ENCODE measurements at regions of chr17 and their contacts with region 1.

Region 1: DNA sequence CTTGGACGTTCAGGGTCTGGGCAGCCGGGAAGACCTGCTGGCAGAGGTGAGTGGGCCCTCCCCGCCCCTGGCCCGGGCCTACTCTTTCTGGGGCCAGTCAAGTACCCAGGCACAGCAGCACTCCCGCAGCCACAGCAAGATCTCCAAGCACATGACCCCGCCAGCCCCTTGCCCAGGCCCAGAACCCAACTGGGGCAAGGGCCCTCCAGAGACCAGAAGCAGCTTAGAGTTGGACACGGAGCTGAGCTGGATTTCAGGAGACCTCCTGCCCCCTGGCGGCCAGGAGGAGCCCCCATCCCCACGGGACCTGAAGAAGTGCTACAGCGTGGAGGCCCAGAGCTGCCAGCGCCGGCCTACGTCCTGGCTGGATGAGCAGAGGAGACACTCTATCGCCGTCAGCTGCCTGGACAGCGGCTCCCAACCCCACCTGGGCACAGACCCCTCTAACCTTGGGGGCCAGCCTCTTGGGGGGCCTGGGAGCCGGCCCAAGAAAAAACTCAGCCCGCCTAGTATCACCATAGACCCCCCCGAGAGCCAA is 8.6 kb upstream of the ABCC3 start:
- DNase-seq: peak; percentile 50 to 52
- H3K4me3 ChIP-seq: no peak overlapping the region
- H3K27ac ChIP-seq: no peak overlapping the region
- H3K4me1 ChIP-seq: peaks cover 31% of the 10 kb centered on the region
- H3K27me3 ChIP-seq: no peaks in the 10 kb centered on the region
- CTCF ChIP-seq: peak; percentile 91

Region 2: GRCh38 chr17:50289991-50290702 is 336.0 kb before region 1 on chr17:
- CTCF ChIA-PET with region 1: no interaction called
- POLR2A ChIA-PET with region 1: no interaction called
- intact Hi-C with region 1: no loop called
- DNase-seq: peak; percentile 70 to 98
- H3K4me3 ChIP-seq: peak overlapping the region; percentile 52
- H3K27ac ChIP-seq: peak overlapping the region; percentile 92
- H3K4me1 ChIP-seq: peaks cover 44% of the 10 kb centered on the region
- H3K27me3 ChIP-seq: no peaks in the 10 kb centered on the region
- CTCF ChIP-seq: 0 out of 2 replicates have a peak, but pooled peaks have one; percentile 14

Region 3: DNA sequence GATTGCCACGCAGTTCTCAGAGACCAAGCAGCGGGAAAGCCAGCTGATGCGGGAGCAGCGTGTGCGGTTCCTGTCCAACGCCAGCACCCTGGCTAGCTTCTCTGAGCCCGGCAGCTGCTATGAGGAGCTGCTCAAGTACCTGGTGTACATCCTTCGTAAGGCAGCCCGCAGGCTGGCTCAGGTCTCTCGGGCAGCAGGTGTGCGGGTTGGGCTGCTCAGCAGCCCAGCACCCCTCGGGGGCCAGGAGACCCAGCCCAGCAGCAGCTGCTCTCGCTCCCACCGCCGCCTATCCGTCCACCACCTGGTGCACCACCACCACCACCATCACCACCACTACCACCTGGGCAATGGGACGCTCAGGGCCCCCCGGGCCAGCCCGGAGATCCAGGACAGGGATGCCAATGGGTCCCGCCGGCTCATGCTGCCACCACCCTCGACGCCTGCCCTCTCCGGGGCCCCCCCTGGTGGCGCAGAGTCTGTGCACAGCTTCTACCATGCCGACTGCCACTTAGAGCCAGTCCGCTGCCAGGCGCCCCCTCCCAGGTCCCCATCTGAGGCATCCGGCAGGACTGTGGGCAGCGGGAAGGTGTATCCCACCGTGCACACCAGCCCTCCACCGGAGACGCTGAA is 50.4 kb before region 1 on chr17:
- CTCF ChIA-PET with region 1: no interaction called
- POLR2A ChIA-PET with region 1: no interaction called
- intact Hi-C with region 1: no loop called
- DNase-seq: no peak
- H3K4me3 ChIP-seq: no peak overlapping the region
- H3K27ac ChIP-seq: no peak overlapping the region
- H3K4me1 ChIP-seq: no peaks in the 10 kb centered on the region
- H3K27me3 ChIP-seq: peaks cover 21% of the 10 kb centered on the region; the same call in 1 of the 2 replicates
- CTCF ChIP-seq: no peak

Region 4: DNA sequence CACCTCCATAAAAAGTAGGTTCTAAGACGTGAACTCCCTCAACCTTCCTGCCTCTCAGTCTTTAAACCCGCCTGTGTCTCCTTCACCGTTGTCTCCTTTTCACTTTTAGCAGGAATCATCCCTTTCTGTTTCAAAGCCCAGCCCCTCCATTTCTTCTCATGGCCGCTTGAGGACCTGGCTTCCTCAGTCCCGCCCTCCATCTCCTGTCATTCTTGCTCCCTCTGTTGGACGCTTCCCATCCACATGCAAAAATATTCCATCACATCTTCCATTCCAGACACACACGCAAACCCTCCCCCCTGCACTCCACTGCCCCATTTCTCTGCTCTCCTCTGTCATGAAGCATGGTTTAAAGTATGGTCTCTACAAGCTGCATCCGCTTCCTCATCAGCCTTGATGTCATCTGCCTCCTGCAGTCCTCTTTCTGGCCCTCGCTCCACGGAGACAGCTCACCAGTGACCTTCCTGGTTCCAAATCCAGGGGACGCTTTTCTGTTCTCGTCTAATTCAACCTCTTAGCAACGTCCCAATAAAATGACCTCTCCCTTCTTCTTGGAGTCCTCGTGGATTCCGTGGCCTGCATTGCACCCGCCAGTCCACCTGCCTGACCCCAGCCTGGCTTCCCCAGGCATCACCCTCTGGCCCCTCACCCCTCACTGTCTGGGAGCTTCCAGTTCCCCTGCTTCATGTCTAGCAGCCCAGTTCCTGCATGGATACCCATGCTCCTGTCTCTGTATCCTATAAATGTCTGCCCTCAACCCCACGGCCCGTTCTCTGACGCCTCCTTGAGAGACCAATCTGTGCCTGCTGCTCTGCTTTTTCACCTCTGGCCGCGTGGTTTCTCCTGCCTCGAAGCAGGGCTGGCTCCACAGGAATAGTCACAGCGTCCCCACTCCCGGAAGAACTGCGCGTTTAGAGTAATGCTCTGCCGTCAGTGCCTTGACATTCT is 55.4 kb after region 1 on chr17:
- CTCF ChIA-PET with region 1: interaction called, 3 read pairs
- POLR2A ChIA-PET with region 1: interaction called, 3 read pairs
- intact Hi-C with region 1: loop called (anchors 2 kb)
- DNase-seq: peak in 1 of 2 experiments; percentile 31
- H3K4me3 ChIP-seq: no peak overlapping the region
- H3K27ac ChIP-seq: no peak overlapping the region
- H3K4me1 ChIP-seq: peaks cover 37% of the 10 kb centered on the region
- H3K27me3 ChIP-seq: no peaks in the 10 kb centered on the region
- CTCF ChIP-seq: 0 out of 2 replicates have a peak, but pooled peaks have one; percentile 29

Region 5: GRCh38 chr17:50697663-50698274 is 71.7 kb after region 1 on chr17:
- CTCF ChIA-PET with region 1: interaction called, 10 read pairs
- POLR2A ChIA-PET with region 1: no interaction called
- intact Hi-C with region 1: loop called (anchors 1 kb)
- DNase-seq: no peak
- H3K4me3 ChIP-seq: no peak overlapping the region
- H3K27ac ChIP-seq: peak overlapping the region; percentile 51; the same call in 1 of the 2 replicates
- H3K4me1 ChIP-seq: peaks cover 84% of the 10 kb centered on the region
- H3K27me3 ChIP-seq: no peaks in the 10 kb centered on the region
- CTCF ChIP-seq: peak; percentile 48; the same call in 1 of the 2 replicates

Region 6: DNA sequence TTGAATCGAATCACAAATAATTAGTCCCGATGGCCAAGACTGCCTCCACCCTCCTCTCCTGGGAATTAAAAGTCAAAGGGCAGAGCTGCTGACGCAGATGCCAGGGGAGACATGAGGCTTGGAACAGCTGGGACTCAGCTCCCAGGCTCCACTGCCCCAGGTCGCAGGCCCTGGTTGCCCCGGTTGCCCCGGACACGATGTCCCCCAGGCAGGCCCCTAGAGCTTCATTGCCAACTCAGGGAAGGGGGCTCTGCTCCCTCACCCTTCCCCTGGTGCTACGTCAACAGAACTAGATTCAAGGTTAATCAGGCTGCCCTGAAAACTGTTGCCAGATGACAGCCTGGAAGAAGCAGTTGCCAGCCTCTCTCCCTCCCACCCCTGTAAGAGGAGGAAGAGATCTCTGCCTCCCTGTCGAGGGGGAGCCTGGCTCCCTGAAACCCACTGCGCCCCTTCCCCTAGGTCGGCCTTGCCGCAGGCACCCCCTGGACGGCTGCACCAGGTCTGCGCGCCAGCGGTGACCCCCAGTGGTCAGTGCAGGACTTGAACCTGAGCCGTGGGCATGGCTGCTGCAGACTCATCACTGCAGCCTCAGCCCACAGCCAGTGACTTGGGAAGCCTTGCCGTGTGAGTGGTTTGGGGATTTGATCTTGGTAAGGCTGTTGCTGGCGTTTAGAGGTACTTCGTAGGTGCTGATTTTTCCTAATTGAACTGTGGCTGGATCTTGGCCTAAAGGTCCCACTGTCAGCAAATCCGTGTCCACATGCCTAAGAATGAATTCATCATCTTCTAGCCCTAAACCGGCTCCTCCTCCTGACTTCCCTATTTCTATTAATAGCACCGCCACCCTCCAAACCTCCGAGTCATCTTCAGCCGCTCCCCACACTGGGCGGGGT is 324.1 kb after region 1 on chr17:
- CTCF ChIA-PET with region 1: no interaction called
- POLR2A ChIA-PET with region 1: interaction called, 10 read pairs
- intact Hi-C with region 1: no loop called
- DNase-seq: peak; percentile 91 to 96
- H3K4me3 ChIP-seq: peak overlapping the region; percentile 34; the same call in 1 of the 2 replicates
- H3K27ac ChIP-seq: peak overlapping the region; percentile 73
- H3K4me1 ChIP-seq: peaks cover 59% of the 10 kb centered on the region
- H3K27me3 ChIP-seq: no peaks in the 10 kb centered on the region
- CTCF ChIP-seq: peak; percentile 90

Measured in PC-9 (cell line).